ENCODE measurements at regions of chr1 and their contacts with region 1.

Region 1: DNA sequence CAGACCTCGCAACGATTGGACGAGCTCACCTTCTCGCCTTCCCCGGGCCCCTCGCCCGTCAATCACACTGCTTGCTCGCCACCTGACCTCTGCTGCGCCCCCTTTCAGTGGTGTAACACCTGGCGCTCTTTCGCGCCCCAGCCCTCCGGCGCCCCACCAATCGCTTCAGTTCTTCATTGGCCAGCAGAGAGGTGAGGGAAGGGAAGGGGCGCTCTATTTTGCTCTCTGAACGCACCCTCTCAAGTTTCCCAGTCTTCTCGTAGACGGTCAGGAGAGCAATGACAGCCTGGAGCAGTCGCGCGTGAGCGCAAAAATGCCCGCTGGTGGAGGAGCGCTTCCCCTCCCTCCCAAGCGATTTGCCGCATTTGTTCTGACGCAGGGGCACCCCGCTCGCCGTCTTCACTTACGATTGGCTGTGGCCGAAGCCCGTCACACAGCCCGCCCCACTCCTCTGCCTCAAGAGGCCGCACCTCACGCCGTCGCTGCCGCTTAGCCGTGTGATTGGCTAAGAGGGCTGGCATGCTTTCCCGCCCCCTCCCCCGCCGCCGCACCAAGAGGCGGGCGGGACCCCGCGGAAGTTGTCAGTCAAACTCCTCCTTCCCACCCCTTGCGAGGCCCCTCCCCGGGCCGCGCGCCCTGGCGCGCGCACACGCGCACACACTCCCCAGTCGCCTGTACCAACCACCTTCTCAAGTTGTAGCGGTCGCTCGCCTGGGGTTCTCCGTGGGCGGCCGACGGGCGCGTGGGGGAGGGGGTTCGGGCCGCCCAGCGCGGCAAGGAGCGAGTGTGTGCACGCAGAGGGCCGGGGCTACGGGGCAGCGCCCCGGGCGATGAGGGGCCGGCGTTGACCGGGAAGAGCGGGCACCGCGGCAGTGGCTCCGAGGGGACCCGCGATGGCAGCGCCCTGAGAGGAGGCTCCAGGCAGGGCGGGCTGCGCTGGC is at the start of gene PPP2R5A:
- DNase-seq: peak; percentile 96 to 100 (median 98)
- ATAC-seq: peak; percentile 85
- H3K4me3 ChIP-seq: peak within 1 kb of the TSS; percentile 89 to 95
- H3K4me3 Mint-ChIP-seq: peak within 1 kb of the TSS; percentile 96
- H3K27ac ChIP-seq: peak within 1 kb of the TSS; percentile 95 to 96
- H3K27ac Mint-ChIP-seq: peak within 1 kb of the TSS; percentile 99
- H3K4me1 ChIP-seq: peaks cover 32% of the 10 kb centered on the region
- H3K4me1 Mint-ChIP-seq: peaks cover 43% of the 10 kb centered on the region
- H3K27me3 ChIP-seq: no peaks in the 10 kb centered on the region
- H3K27me3 Mint-ChIP-seq: no peaks in the 10 kb centered on the region
- CTCF ChIP-seq: no peak
- total RNA-seq, gene PPP2R5A: 57.8 to 60.5 TPM

Region 2: GRCh38 chr1:212062832-212063438 is 222.1 kb before region 1 on chr1:
- CTCF ChIA-PET with region 1: interaction called, 16 read pairs
- POLR2A ChIA-PET with region 1: interaction called, 4 read pairs
- intact Hi-C with region 1: loop called (anchors 2 kb)
- DNase-seq: peak in 2 of 9 experiments; percentile 39 to 59
- ATAC-seq: peak; percentile 62
- H3K4me3 ChIP-seq: no peak overlapping the region
- H3K4me3 Mint-ChIP-seq: no peak overlapping the region
- H3K27ac ChIP-seq: no peak overlapping the region
- H3K27ac Mint-ChIP-seq: no peak overlapping the region
- H3K4me1 ChIP-seq: no peaks in the 10 kb centered on the region
- H3K4me1 Mint-ChIP-seq: no peaks in the 10 kb centered on the region
- H3K27me3 ChIP-seq: no peaks in the 10 kb centered on the region
- H3K27me3 Mint-ChIP-seq: no peaks in the 10 kb centered on the region
- CTCF ChIP-seq: peak; percentile 74

Region 3: DNA sequence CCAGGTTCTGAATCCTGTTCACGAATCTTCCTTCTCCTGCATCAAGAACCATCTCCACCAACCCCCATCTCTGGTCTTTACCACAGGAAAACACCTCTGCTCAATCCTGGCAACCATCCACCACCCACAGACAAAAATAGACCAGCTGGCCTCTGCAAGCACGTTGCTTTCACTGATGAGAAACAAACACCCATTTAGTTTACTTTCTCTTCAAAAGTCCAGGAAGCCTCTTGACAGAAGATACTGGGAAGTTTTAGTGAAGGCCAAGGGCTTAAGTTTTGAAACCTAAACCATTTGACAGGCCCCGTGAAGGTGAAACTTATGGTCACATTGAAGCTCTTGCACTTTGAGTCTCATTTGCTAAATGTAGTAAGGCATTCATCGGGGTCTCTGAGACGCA is 122.4 kb before region 1 on chr1:
- CTCF ChIA-PET with region 1: no interaction called
- POLR2A ChIA-PET with region 1: no interaction called
- intact Hi-C with region 1: loop called in 1 of 2 experiments (anchors 10 kb)
- DNase-seq: peak in 7 of 9 experiments; percentile 11 to 58 (median 31)
- ATAC-seq: no peak
- H3K4me3 ChIP-seq: no peak overlapping the region
- H3K4me3 Mint-ChIP-seq: peak overlapping the region; percentile 0
- H3K27ac ChIP-seq: no peak overlapping the region
- H3K27ac Mint-ChIP-seq: no peak overlapping the region
- H3K4me1 ChIP-seq: peaks cover 24% of the 10 kb centered on the region
- H3K4me1 Mint-ChIP-seq: peaks cover 29% of the 10 kb centered on the region
- H3K27me3 ChIP-seq: no peaks in the 10 kb centered on the region
- H3K27me3 Mint-ChIP-seq: no peaks in the 10 kb centered on the region
- CTCF ChIP-seq: no peak

Region 4: GRCh38 chr1:212346601-212347000 is 61.6 kb after region 1 on chr1:
- CTCF ChIA-PET with region 1: no interaction called
- POLR2A ChIA-PET with region 1: no interaction called
- intact Hi-C with region 1: loop called in 1 of 2 experiments (anchors 5 kb)
- DNase-seq: no peak
- ATAC-seq: no peak
- H3K4me3 ChIP-seq: no peak overlapping the region
- H3K4me3 Mint-ChIP-seq: no peak overlapping the region
- H3K27ac ChIP-seq: no peak overlapping the region
- H3K27ac Mint-ChIP-seq: no peak overlapping the region
- H3K4me1 ChIP-seq: no peaks in the 10 kb centered on the region
- H3K4me1 Mint-ChIP-seq: peaks cover 2% of the 10 kb centered on the region
- H3K27me3 ChIP-seq: no peaks in the 10 kb centered on the region
- H3K27me3 Mint-ChIP-seq: no peaks in the 10 kb centered on the region
- CTCF ChIP-seq: no peak

Region 5: GRCh38 chr1:212432706-212433576 is 147.9 kb after region 1 on chr1 and contains the start of gene NENF:
- CTCF ChIA-PET with region 1: no interaction called
- POLR2A ChIA-PET with region 1: interaction called, 6 read pairs
- intact Hi-C with region 1: loop called in 1 of 2 experiments (anchors 5 kb)
- DNase-seq: peak; percentile 44 to 86 (median 70)
- ATAC-seq: peak; percentile 99
- H3K4me3 ChIP-seq: peak within 1 kb of the TSS; percentile 61 to 71
- H3K4me3 Mint-ChIP-seq: peak within 1 kb of the TSS; percentile 81
- H3K27ac ChIP-seq: peak within 1 kb of the TSS in 1 of 2 experiments; percentile 55
- H3K27ac Mint-ChIP-seq: peak within 1 kb of the TSS; percentile 74
- H3K4me1 ChIP-seq: peaks cover 17% of the 10 kb centered on the region
- H3K4me1 Mint-ChIP-seq: peaks cover 34% of the 10 kb centered on the region
- H3K27me3 ChIP-seq: no peaks in the 10 kb centered on the region
- H3K27me3 Mint-ChIP-seq: no peaks in the 10 kb centered on the region
- CTCF ChIP-seq: no peak
- total RNA-seq, gene NENF: 17.7 to 20.3 TPM

Region 6: DNA sequence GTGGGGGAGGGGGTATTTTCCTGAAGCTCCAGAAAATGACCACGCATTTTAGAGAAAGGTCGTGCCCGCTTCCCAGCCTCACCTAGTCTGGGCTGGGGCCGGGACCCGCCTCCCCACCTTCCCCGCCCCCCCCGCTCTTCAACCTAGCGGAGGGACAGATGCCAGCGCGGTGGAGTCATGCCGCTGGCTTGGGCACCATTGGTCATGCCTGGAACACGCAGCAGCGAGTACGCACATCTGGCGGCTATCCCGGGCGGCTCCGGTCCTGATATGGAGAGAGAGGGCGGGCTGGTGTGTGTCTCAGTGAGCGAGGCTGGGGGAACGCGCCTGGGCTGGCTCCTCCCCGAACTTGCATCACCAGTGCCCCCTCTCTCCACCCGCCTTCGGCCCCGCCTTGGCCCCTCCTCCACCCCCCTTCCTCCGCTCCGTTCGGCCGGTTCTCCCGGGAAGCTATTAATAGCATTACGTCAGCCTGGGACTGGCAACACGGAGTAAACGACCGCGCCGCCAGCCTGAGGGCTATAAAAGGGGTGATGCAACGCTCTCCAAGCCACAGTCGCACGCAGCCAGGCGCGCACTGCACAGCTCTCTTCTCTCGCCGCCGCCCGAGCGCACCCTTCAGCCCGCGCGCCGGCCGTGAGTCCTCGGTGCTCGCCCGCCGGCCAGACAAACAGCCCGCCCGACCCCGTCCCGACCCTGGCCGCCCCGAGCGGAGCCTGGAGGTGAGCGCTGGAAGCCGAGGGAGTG is 323.4 kb after region 1 on chr1 and contains the start of gene ATF3:
- CTCF ChIA-PET with region 1: no interaction called
- POLR2A ChIA-PET with region 1: no interaction called
- intact Hi-C with region 1: loop called in 1 of 2 experiments (anchors 5 kb)
- DNase-seq: peak; percentile 62 to 91 (median 78)
- ATAC-seq: peak; percentile 73
- H3K4me3 ChIP-seq: peak within 1 kb of the TSS; percentile 75 to 86
- H3K4me3 Mint-ChIP-seq: peak within 1 kb of the TSS; percentile 94
- H3K27ac ChIP-seq: peak within 1 kb of the TSS in 1 of 2 experiments; percentile 31
- H3K27ac Mint-ChIP-seq: peak within 1 kb of the TSS; percentile 83
- H3K4me1 ChIP-seq: peaks cover 25% of the 10 kb centered on the region
- H3K4me1 Mint-ChIP-seq: peaks cover 22% of the 10 kb centered on the region
- H3K27me3 ChIP-seq: peaks cover 39 to 56% of the 10 kb centered on the region in 2 experiments
- H3K27me3 Mint-ChIP-seq: peaks cover 54% of the 10 kb centered on the region
- CTCF ChIP-seq: no peak
- total RNA-seq, gene ATF3: 8.9 to 10.4 TPM

Region 7: DNA sequence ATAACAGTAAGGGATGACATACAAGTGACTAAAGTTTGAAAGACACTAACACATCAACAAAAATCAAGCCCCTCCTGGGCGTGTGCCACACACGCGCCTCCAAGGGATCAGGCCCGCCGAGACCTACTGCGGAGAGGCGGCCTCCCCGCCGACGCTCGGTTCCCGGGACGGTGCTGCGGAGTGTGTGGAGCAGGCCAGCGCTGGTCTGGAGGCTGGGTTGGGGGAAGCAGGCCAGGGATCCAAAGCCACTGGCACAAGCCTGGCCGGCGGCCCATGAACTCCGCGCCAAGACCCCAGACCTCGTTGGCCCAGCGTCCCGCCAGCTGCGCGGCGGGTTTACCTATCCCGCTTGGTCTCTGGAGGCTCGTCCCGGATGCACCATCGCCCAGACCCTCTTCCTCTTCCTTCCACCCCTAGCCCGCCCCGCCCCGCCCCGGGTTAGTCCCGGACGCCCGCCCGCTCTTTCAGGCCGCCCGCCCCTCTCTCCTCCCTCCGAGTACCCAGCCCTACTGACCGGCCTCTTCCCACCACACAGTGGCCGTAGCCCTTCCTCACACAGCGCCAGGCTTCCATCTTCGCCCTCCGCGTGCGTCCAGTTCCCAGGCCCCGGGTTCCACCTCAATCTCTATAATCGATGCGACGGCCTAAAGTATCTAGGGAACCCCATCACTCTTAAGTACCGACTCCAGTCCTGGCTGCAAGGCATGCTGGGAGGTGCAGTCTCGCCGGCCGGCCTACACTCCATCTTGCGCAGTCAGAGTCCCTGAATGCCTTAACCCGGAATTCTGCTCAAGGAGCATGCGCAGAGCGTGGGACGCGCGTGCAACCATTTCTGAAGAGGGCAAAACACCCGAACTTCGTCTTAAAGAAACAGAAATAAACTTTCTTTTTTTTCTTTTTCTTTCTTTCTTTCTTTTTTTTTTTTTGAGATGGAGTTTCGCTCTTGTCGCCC is 730.4 kb after region 1 on chr1 and contains the start of gene ANGEL2:
- CTCF ChIA-PET with region 1: no interaction called
- POLR2A ChIA-PET with region 1: no interaction called
- intact Hi-C with region 1: loop called in 1 of 2 experiments (anchors 10 kb)
- DNase-seq: peak; percentile 90 to 99 (median 95)
- ATAC-seq: peak; percentile 97
- H3K4me3 ChIP-seq: peak within 1 kb of the TSS; percentile 90 to 96
- H3K4me3 Mint-ChIP-seq: peak within 1 kb of the TSS; percentile 100
- H3K27ac ChIP-seq: peak within 1 kb of the TSS; percentile 90 to 92
- H3K27ac Mint-ChIP-seq: peak within 1 kb of the TSS; percentile 100
- H3K4me1 ChIP-seq: peaks cover 19% of the 10 kb centered on the region
- H3K4me1 Mint-ChIP-seq: peaks cover 40% of the 10 kb centered on the region
- H3K27me3 ChIP-seq: no peaks in the 10 kb centered on the region
- H3K27me3 Mint-ChIP-seq: no peaks in the 10 kb centered on the region
- CTCF ChIP-seq: no peak
- total RNA-seq, gene ANGEL2: 47.4 to 52.5 TPM

Measured in CD8-positive, alpha-beta T cell (primary cell).